ENCODE measurements at regions of chr14 and their contacts with region 1.

Region 1: GRCh38 chr14:103920981-103921854 is 7.0 kb upstream of the TDRD9 start:
- DNase-seq: peak; percentile 90 to 99 (median 96)
- ATAC-seq: peak; percentile 100
- H3K4me3 ChIP-seq: peak overlapping the region; percentile 100
- H3K4me3 Mint-ChIP-seq: peak overlapping the region; percentile 85 to 96 (median 90)
- H3K27ac ChIP-seq: peak overlapping the region; percentile 83
- H3K27ac Mint-ChIP-seq: peak overlapping the region; percentile 61 to 90 (median 83)
- H3K4me1 ChIP-seq: peaks cover 9 to 16% of the 10 kb centered on the region in 2 donors
- H3K4me1 Mint-ChIP-seq: peaks cover 0 to 37% (median 16%) of the 10 kb centered on the region in 7 donors
- H3K27me3 ChIP-seq: no peaks in the 10 kb centered on the region
- H3K27me3 Mint-ChIP-seq: peaks cover 4 to 14% (median 9%) of the 10 kb centered on the region in 5 donors

Region 2: GRCh38 chr14:103385152-103385993 is 535.8 kb before region 1 on chr14 and contains the start of gene MARK3:
- CTCF ChIA-PET with region 1: no interaction called
- POLR2A ChIA-PET with region 1: no interaction called
- intact Hi-C with region 1: loop called in 1 of 2 experiments (anchors 2 kb)
- DNase-seq: peak; percentile 92 to 96 (median 95)
- ATAC-seq: peak; percentile 93
- H3K4me3 ChIP-seq: peak within 1 kb of the TSS; percentile 98
- H3K4me3 Mint-ChIP-seq: peak within 1 kb of the TSS; percentile 94 to 99 (median 96)
- H3K27ac ChIP-seq: peak within 1 kb of the TSS; percentile 90
- H3K27ac Mint-ChIP-seq: peak within 1 kb of the TSS; percentile 91 to 98 (median 95)
- H3K4me1 ChIP-seq: peaks cover 26 to 32% of the 10 kb centered on the region in 2 donors
- H3K4me1 Mint-ChIP-seq: peaks cover 12 to 51% (median 37%) of the 10 kb centered on the region in 7 donors
- H3K27me3 ChIP-seq: no peaks in the 10 kb centered on the region
- H3K27me3 Mint-ChIP-seq: peaks cover 0 to 13% (median 9%) of the 10 kb centered on the region in 5 donors
- total RNA-seq, gene MARK3: 86.9 to 133 (median 116) TPM

Region 3: GRCh38 chr14:103562429-103563225 is 358.6 kb before region 1 on chr14 and contains the starts of genes BAG5 and COA8:
- CTCF ChIA-PET with region 1: no interaction called
- POLR2A ChIA-PET with region 1: no interaction called
- intact Hi-C with region 1: loop called (anchors 1 to 5 kb)
- DNase-seq: peak; percentile 81 to 94 (median 88)
- ATAC-seq: peak; percentile 91
- H3K4me3 ChIP-seq: peak within 1 kb of the TSS; percentile 91
- H3K4me3 Mint-ChIP-seq: peak within 1 kb of the TSS; percentile 91 to 98 (median 94)
- H3K27ac ChIP-seq: peak within 1 kb of the TSS; percentile 87
- H3K27ac Mint-ChIP-seq: peak within 1 kb of the TSS; percentile 87 to 96 (median 92)
- H3K4me1 ChIP-seq: peaks cover 32 to 38% of the 10 kb centered on the region in 2 donors
- H3K4me1 Mint-ChIP-seq: peaks cover 47 to 73% (median 62%) of the 10 kb centered on the region in 7 donors
- H3K27me3 ChIP-seq: no peaks in the 10 kb centered on the region
- H3K27me3 Mint-ChIP-seq: no peaks in the 10 kb centered on the region
- total RNA-seq, gene BAG5: 29.9 to 38.9 (median 36.4) TPM
- total RNA-seq, gene COA8: 13.6 to 26.3 (median 24.1) TPM

Region 4: DNA sequence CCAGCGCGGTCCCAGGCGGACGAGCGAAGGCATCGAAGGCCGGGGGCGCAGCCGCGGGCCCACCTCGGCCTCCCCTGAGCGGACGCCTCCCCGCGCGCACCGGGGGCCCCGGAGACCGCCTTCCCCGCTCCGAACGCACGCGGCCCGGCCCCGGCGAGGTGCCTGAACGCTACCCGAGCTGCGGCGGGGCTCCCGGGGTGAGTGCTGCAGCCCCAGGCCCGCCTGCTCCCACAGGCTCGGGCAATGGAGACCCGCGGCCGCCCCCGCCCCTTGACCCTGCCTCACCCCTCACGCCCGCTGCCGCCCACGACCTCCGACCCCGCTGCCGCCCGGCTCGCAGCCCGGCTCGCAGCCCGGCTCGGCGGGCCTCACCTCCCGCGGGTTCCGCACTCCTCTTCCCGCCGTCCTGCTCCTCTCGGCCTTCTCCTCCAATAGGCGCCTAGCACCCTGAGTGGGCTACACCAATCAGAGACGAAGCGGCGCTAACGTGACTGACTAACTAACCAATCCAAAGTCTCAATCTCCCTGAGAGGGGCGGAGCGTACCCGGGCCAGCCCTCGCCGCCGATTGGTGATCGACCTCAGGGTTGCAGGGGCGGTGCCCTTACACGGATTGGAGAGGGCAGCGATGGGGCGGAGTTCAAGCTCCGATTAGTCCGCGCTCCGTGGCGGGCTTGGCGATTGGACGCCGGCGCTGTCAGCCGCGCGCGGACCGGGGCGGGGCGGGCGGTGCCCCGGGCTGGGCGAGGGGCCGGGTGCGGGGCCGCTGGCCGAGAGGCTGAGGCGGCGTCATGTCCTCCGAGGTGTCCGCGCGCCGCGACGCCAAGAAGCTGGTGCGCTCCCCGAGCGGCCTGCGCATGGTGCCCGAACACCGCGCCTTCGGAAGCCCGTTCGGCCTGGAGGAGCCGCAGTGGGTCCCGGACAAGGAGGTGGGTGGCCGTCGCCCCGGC is 205.9 kb before region 1 on chr14 and contains the starts of genes XRCC3 and ZFYVE21:
- CTCF ChIA-PET with region 1: interaction called, 3 read pairs
- POLR2A ChIA-PET with region 1: no interaction called
- intact Hi-C with region 1: loop called (anchors 1 to 2 kb)
- DNase-seq: peak; percentile 96 to 100 (median 100)
- ATAC-seq: peak; percentile 97
- H3K4me3 ChIP-seq: peak within 1 kb of the TSS; percentile 56
- H3K4me3 Mint-ChIP-seq: peak within 1 kb of the TSS; percentile 89 to 98 (median 94)
- H3K27ac ChIP-seq: peak within 1 kb of the TSS; percentile 73
- H3K27ac Mint-ChIP-seq: peak within 1 kb of the TSS; percentile 40 to 95 (median 91)
- H3K4me1 ChIP-seq: peaks cover 8 to 13% of the 10 kb centered on the region in 2 donors
- H3K4me1 Mint-ChIP-seq: peaks cover 38 to 69% (median 52%) of the 10 kb centered on the region in 7 donors
- H3K27me3 ChIP-seq: no peaks in the 10 kb centered on the region
- H3K27me3 Mint-ChIP-seq: peaks cover 0 to 2% (median 0%) of the 10 kb centered on the region in 5 donors
- total RNA-seq, gene XRCC3: 9.3 to 38.9 (median 15.9) TPM
- total RNA-seq, gene ZFYVE21: 5.8 to 19.0 (median 16.8) TPM

Region 5: GRCh38 chr14:103847451-103848188 is 73.6 kb before region 1 on chr14 and contains the start of gene PPP1R13B:
- CTCF ChIA-PET with region 1: no interaction called
- POLR2A ChIA-PET with region 1: no interaction called
- intact Hi-C with region 1: loop called (anchors 1 kb)
- DNase-seq: peak; percentile 85 to 97 (median 91)
- ATAC-seq: peak; percentile 99
- H3K4me3 ChIP-seq: peak within 1 kb of the TSS; percentile 51
- H3K4me3 Mint-ChIP-seq: peak within 1 kb of the TSS; percentile 78 to 94 (median 89)
- H3K27ac ChIP-seq: peak within 1 kb of the TSS; percentile 67
- H3K27ac Mint-ChIP-seq: peak within 1 kb of the TSS; percentile 60 to 92 (median 79)
- H3K4me1 ChIP-seq: no peaks in the 10 kb centered on the region
- H3K4me1 Mint-ChIP-seq: peaks cover 11 to 24% (median 17%) of the 10 kb centered on the region in 7 donors
- H3K27me3 ChIP-seq: no peaks in the 10 kb centered on the region
- H3K27me3 Mint-ChIP-seq: peaks cover 0 to 36% (median 0%) of the 10 kb centered on the region in 5 donors
- total RNA-seq, gene PPP1R13B: 10.8 to 26.8 (median 17.7) TPM

Region 6: GRCh38 chr14:103910262-103910935 is 10.8 kb before region 1 on chr14:
- CTCF ChIA-PET with region 1: interaction called, 12 read pairs
- POLR2A ChIA-PET with region 1: no interaction called
- intact Hi-C with region 1: no loop called
- DNase-seq: peak; percentile 43 to 74 (median 71)
- ATAC-seq: peak; percentile 86
- H3K4me3 ChIP-seq: peak overlapping the region; percentile 40
- H3K4me3 Mint-ChIP-seq: peak overlapping the region; percentile 70 to 88 (median 78)
- H3K27ac ChIP-seq: peak overlapping the region; percentile 59
- H3K27ac Mint-ChIP-seq: peak overlapping the region; percentile 73 to 96 (median 84)
- H3K4me1 ChIP-seq: peaks cover 13 to 23% of the 10 kb centered on the region in 2 donors
- H3K4me1 Mint-ChIP-seq: peaks cover 7 to 34% (median 28%) of the 10 kb centered on the region in 7 donors
- H3K27me3 ChIP-seq: no peaks in the 10 kb centered on the region
- H3K27me3 Mint-ChIP-seq: no peaks in the 10 kb centered on the region

Measured in naive thymus-derived CD4-positive, alpha-beta T cell (primary cell).